ENCODE measurements at regions of chr17 and their contacts with region 1.

Region 1: DNA sequence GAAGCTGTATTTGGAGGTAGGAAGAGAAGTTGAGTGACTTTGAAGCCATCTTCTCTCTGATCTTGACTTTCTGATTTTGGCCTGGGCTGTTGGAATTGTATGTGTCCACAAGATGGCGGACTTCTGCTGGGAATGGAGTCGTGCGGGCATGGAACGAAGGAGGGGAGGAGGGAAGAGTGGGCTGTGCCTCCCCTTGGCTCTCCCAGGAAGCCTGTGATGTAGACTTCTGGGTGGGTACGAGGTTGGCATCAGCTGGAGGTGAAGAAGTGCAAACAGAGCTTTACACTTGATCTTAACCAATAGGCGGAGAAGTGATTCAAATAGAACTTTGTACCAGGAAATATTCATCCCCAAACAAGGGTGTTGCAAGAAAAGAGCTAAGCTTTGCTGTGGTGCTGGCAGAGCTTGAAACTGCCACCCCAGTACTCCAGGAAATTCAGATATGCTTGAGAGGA is 7.4 kb upstream of the TMEM220 start:
- DNase-seq: peak; percentile 72 to 92
- ATAC-seq: peak; percentile 95 to 96
- H3K4me3 ChIP-seq: no peak overlapping the region
- H3K27ac ChIP-seq: peak overlapping the region in 1 of 2 experiments; percentile 59; a peak in 4 of 6 replicates
- H3K4me1 ChIP-seq: peaks cover 18% of the 10 kb centered on the region
- CTCF ChIP-seq: peak; percentile 93
- EP300 ChIP-seq: no peak; a peak in 1 of 5 replicates
- POLR2A ChIP-seq: no peak
- RAD21 ChIP-seq: peak; percentile 88 to 92

Region 2: DNA sequence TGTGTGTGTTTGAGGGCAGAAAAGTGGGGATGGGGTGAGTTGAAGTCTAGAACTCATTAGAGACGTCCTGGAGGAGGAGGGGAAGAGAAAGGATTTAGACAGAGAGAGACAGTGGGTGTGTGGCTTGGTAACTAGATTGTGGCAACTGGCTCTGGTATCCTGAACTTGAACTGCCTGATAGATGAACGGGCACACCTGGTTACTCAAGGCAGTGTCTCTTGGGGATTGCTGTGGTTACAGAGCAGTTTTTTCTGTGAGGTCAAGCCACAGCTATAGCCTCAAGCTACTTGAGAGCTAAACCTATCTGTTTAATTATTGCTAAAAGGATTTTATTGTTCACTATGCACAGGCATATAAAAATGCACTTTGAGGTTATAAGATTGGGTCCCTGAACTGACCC is 157.9 kb before region 1 on chr17:
- CTCF ChIA-PET with region 1: no interaction called
- POLR2A ChIA-PET with region 1: no interaction called
- DNase-seq: no peak
- ATAC-seq: peak in 1 of 2 experiments; percentile 47; a peak in 3 of 6 replicates
- H3K4me3 ChIP-seq: no peak overlapping the region
- H3K27ac ChIP-seq: no peak overlapping the region
- H3K4me1 ChIP-seq: no peaks in the 10 kb centered on the region
- CTCF ChIP-seq: no peak
- EP300 ChIP-seq: no peak
- POLR2A ChIP-seq: no peak
- RAD21 ChIP-seq: no peak

Region 3: DNA sequence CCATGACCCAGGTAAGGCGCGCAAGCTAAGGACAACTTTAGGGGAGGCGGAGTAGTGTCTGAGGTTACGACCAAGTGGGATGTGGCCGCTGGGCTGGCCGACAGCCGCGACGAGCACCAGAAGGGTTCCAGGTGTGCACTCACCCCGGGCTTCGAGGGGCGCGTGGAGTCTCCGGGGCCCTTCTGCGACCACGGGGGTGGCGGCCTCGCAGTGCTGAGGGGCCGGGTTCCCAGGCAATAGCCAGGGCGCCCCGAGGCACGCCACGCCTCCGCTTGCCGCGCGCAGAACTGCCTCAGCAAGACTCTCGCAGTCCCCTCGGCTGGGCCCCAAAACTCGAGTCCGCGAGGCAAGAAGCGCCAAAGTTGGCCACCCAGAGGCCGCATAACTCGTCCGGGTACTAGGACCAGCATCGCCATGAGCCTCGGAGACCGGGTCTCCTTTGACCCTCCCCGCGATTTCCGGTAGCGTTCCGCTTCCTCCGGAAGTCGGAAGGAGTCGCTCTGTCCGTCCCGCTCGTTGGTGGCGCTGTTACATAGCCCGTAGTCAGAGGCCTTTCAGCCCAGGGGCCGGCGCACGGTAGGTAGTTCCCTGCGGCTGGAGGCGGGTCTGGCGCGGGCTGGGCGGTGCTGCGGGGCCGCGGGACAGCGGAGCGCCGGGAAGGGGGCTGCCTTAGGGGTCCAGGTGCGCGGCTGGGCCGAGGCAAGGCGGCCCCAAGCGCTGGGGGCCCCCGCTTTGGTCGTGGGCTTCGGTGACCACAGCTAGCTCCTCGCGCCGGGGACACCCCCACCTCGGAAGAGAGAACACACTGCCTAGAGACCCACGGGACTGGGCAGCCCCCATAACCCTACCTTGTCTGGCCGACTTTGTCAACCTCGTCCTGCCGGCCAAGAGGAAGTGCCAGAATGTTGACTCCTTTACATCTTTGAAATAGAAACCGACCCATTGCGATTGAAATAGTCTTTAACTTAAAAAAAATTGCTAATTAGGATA is 39.8 kb before region 1 on chr17 and contains the starts of genes ADPRM and SCO1:
- CTCF ChIA-PET with region 1: interaction called, 17 read pairs
- POLR2A ChIA-PET with region 1: no interaction called
- DNase-seq: peak; percentile 88 to 95
- ATAC-seq: peak; percentile 99 to 100
- H3K4me3 ChIP-seq: peak within 1 kb of the TSS; percentile 85
- H3K27ac ChIP-seq: peak within 1 kb of the TSS; percentile 85 to 99
- H3K4me1 ChIP-seq: peaks cover 15% of the 10 kb centered on the region
- CTCF ChIP-seq: peak; percentile 16; the same call in 1 of the 3 replicates
- EP300 ChIP-seq: no peak
- POLR2A ChIP-seq: peak; percentile 78
- RAD21 ChIP-seq: 0 out of 5 replicates have a peak, but pooled peaks of 1 of the 2 experiments have one; percentile 23
- polyA plus RNA-seq, gene ADPRM: 24.3 and 25.2 TPM in 2 replicates
- polyA plus RNA-seq, gene SCO1: 43.1 and 55.8 TPM in 2 replicates

Region 4: DNA sequence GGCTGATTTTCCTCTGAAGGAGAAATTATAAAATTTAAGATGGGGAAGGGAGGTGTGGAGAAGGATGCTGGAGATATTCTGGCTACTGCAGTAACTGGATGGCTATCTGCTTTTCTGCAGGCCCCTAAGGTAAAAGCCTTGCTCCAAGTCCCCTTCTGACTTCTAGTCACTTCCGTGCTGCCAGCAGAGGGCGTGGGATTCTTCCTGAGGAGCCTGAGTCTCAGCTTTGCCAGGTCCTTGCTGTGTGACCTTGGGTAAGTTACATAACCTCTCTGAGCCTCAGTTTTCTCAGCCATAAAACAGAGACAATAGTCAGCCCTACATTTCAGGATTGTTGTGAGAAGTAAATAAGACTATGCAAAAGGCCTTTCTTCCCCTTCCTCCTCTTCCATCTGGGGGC is 16.9 kb after region 1 on chr17:
- CTCF ChIA-PET with region 1: interaction called, 34 read pairs
- POLR2A ChIA-PET with region 1: no interaction called
- DNase-seq: peak; percentile 72 to 80
- ATAC-seq: peak; percentile 67 to 86; a peak in 4 of 6 replicates
- H3K4me3 ChIP-seq: no peak overlapping the region
- H3K27ac ChIP-seq: no peak overlapping the region
- H3K4me1 ChIP-seq: no peaks in the 10 kb centered on the region
- CTCF ChIP-seq: peak; percentile 61
- EP300 ChIP-seq: no peak
- POLR2A ChIP-seq: no peak
- RAD21 ChIP-seq: peak; percentile 43 to 47; a peak in 4 of 5 replicates

Region 5: GRCh38 chr17:10844621-10845387 is 107.6 kb after region 1 on chr17:
- CTCF ChIA-PET with region 1: interaction called, 127 read pairs
- POLR2A ChIA-PET with region 1: no interaction called
- DNase-seq: peak; percentile 82 to 86
- ATAC-seq: peak; percentile 91 to 98
- H3K4me3 ChIP-seq: peak overlapping the region; percentile 38
- H3K27ac ChIP-seq: peak overlapping the region; percentile 34 to 77
- H3K4me1 ChIP-seq: no peaks in the 10 kb centered on the region
- CTCF ChIP-seq: peak; percentile 97
- EP300 ChIP-seq: no peak
- POLR2A ChIP-seq: no peak
- RAD21 ChIP-seq: peak; percentile 90 to 93

Region 6: GRCh38 chr17:11144358-11145233 is 407.4 kb after region 1 on chr17:
- CTCF ChIA-PET with region 1: interaction called, 16 read pairs
- POLR2A ChIA-PET with region 1: no interaction called
- DNase-seq: peak; percentile 28 to 63
- ATAC-seq: peak; percentile 71 to 83; a peak in 5 of 6 replicates
- H3K4me3 ChIP-seq: no peak overlapping the region
- H3K27ac ChIP-seq: no peak overlapping the region
- H3K4me1 ChIP-seq: no peaks in the 10 kb centered on the region
- CTCF ChIP-seq: peak; percentile 52
- EP300 ChIP-seq: no peak
- POLR2A ChIP-seq: no peak
- RAD21 ChIP-seq: peak; percentile 55 to 73

Measured in A549 (cell line).